Activated CD8-positive, alpha-beta T cell treated with anti-CD3 and anti-CD28 coated beads for 36 hours (primary cell): ENCODE measurements at regions of chr10 and their contacts with region 1.

Region 1: DNA sequence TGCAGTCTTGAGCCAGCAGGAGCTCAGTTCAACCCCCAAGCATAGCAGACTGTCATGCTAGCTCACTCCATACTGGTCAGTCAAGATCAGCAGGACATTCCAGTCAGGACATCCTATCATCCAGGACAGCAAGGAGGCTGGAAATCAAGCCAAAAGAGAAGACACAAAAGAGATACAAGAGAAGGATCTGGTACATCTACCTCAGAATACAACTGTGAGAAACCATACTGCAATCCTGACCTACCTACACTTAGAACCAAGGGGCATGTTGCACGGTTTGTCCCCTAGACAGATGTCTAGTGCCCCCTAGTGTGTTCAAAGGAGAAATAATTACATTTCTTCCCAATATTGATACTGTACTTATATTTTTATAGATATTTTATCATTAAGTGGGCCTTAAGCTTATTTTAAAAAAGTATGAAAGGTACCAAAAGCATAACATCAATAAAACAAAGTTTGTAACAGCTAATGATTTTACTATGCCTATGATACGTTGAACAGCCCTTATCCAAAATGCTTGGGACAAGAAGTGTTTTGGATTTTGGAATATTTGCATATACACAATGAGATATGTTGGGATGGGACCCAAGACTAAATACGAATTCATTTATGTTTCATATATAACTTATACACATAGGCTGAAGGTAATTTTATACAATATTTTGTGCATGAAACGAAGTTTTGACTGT is 26.7 kb downstream of the ERCC6 start:
- DNase-seq: peak; percentile 28
- ATAC-seq: peak; percentile 63
- H3K4me3 Mint-ChIP-seq: no peak overlapping the region
- H3K27ac Mint-ChIP-seq: no peak overlapping the region
- H3K4me1 Mint-ChIP-seq: peaks cover 21% of the 10 kb centered on the region
- H3K27me3 Mint-ChIP-seq: peaks cover 12% of the 10 kb centered on the region
- CTCF ChIP-seq: peak; percentile 86

Region 2: GRCh38 chr10:49500418-49500817 is 11.8 kb before region 1 on chr10:
- CTCF ChIA-PET with region 1: interaction called, 10 read pairs
- POLR2A ChIA-PET with region 1: no interaction called
- intact Hi-C with region 1: no loop called
- DNase-seq: no peak
- ATAC-seq: no peak
- H3K4me3 Mint-ChIP-seq: no peak overlapping the region
- H3K27ac Mint-ChIP-seq: no peak overlapping the region
- H3K4me1 Mint-ChIP-seq: no peaks in the 10 kb centered on the region
- H3K27me3 Mint-ChIP-seq: no peaks in the 10 kb centered on the region
- CTCF ChIP-seq: no peak

Region 3: GRCh38 chr10:49526619-49527018 is 14.4 kb after region 1 on chr10:
- CTCF ChIA-PET with region 1: interaction called, 10 read pairs
- POLR2A ChIA-PET with region 1: no interaction called
- intact Hi-C with region 1: no loop called
- DNase-seq: no peak
- ATAC-seq: no peak
- H3K4me3 Mint-ChIP-seq: no peak overlapping the region
- H3K27ac Mint-ChIP-seq: no peak overlapping the region
- H3K4me1 Mint-ChIP-seq: peaks cover 10% of the 10 kb centered on the region
- H3K27me3 Mint-ChIP-seq: no peaks in the 10 kb centered on the region
- CTCF ChIP-seq: no peak

Region 4: GRCh38 chr10:49562893-49563292 is 50.6 kb after region 1 on chr10:
- CTCF ChIA-PET with region 1: no interaction called
- POLR2A ChIA-PET with region 1: no interaction called
- intact Hi-C with region 1: no loop called
- DNase-seq: no peak
- ATAC-seq: no peak
- H3K4me3 Mint-ChIP-seq: no peak overlapping the region
- H3K27ac Mint-ChIP-seq: no peak overlapping the region
- H3K4me1 Mint-ChIP-seq: peaks cover 2% of the 10 kb centered on the region
- H3K27me3 Mint-ChIP-seq: peaks cover 37% of the 10 kb centered on the region
- CTCF ChIP-seq: no peak